ENCODE measurements at regions of chr15 and their contacts with region 1.

Region 1: DNA sequence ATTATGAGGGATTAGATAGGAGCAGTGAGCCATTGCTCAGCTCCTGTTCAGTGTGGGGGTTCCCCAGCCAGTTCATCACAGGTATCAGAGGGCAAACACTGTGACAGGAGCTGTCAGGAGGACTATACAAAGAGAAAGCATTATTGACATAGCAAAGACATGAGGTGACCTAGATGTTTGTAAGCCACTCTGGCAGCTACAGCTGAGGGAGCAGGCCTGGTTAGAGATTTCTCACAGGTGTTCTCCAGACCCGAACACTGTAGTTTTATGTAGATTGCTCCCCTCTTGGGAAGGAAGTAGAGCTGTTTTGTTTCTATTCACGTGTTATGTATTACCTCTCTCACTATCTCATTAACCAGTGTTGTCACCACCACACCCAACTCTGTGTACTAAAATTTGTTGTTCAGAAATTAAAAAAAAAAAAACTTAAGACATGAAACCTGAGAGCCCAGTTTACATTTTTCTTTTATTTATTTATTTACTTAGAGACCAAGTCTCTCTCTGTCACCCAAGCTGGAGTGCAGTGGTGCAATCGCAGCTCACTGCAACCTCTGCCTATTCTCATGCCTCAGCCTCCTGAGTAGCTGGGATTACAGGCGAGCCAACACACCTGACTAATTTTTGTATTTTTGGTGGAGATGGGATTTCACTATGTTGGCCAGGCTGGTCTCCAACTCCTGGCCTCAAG is 123.7 kb downstream of the RBPMS2 start:
- DNase-seq: peak; percentile 39
- ATAC-seq: peak; percentile 86
- H3K4me3 Mint-ChIP-seq: peak overlapping the region; percentile 24
- H3K27ac Mint-ChIP-seq: peak overlapping the region; percentile 77
- H3K4me1 Mint-ChIP-seq: peaks cover 28% of the 10 kb centered on the region
- H3K27me3 Mint-ChIP-seq: no peaks in the 10 kb centered on the region

Region 2: DNA sequence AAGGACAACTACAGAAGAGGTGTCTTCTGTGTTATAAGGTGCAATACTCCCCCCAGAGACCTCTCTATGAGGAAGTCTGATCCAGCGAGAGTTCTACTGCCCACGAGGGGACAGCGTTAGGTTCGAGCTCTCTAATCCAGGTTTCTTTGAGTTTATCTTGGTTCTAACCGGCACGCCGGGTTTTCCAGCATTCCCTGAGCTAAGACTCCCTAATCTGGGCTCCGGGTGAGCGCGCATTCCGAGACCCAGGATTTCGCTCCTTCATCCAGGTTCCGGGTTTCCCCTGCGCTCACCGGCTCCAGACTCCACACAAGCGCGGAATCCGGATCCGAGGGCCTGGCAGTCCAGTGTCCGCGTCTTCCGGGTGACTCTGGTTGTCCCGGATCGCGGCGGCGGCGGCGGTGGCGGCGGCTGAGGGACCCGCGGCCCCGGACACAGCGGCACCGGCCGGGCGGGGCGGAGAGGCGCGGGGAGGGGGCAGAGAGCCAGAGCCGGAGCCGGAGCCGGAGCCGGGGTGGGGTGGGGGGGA is 191.4 kb before region 1 on chr15 and contains the start of gene ZNF609:
- CTCF ChIA-PET with region 1: interaction called, 12 read pairs
- POLR2A ChIA-PET with region 1: no interaction called
- DNase-seq: peak; percentile 89
- ATAC-seq: peak; percentile 68
- H3K4me3 Mint-ChIP-seq: peak within 1 kb of the TSS; percentile 90
- H3K27ac Mint-ChIP-seq: peak within 1 kb of the TSS; percentile 89
- H3K4me1 Mint-ChIP-seq: peaks cover 68% of the 10 kb centered on the region
- H3K27me3 Mint-ChIP-seq: no peaks in the 10 kb centered on the region
- total RNA-seq, gene ZNF609: 39.9 to 40.5 TPM

Region 3: GRCh38 chr15:64634576-64635498 is 16.9 kb before region 1 on chr15:
- CTCF ChIA-PET with region 1: interaction called, 20 read pairs
- POLR2A ChIA-PET with region 1: interaction called, 8 read pairs
- DNase-seq: peak; percentile 73
- ATAC-seq: peak; percentile 78
- H3K4me3 Mint-ChIP-seq: peak overlapping the region; percentile 52
- H3K27ac Mint-ChIP-seq: peak overlapping the region; percentile 83
- H3K4me1 Mint-ChIP-seq: peaks cover 73% of the 10 kb centered on the region
- H3K27me3 Mint-ChIP-seq: no peaks in the 10 kb centered on the region

Region 4: GRCh38 chr15:64665179-64665578 is 13.5 kb after region 1 on chr15:
- CTCF ChIA-PET with region 1: interaction called, 11 read pairs
- POLR2A ChIA-PET with region 1: no interaction called
- DNase-seq: no peak
- ATAC-seq: no peak
- H3K4me3 Mint-ChIP-seq: no peak overlapping the region
- H3K27ac Mint-ChIP-seq: no peak overlapping the region
- H3K4me1 Mint-ChIP-seq: no peaks in the 10 kb centered on the region
- H3K27me3 Mint-ChIP-seq: no peaks in the 10 kb centered on the region

Region 5: DNA sequence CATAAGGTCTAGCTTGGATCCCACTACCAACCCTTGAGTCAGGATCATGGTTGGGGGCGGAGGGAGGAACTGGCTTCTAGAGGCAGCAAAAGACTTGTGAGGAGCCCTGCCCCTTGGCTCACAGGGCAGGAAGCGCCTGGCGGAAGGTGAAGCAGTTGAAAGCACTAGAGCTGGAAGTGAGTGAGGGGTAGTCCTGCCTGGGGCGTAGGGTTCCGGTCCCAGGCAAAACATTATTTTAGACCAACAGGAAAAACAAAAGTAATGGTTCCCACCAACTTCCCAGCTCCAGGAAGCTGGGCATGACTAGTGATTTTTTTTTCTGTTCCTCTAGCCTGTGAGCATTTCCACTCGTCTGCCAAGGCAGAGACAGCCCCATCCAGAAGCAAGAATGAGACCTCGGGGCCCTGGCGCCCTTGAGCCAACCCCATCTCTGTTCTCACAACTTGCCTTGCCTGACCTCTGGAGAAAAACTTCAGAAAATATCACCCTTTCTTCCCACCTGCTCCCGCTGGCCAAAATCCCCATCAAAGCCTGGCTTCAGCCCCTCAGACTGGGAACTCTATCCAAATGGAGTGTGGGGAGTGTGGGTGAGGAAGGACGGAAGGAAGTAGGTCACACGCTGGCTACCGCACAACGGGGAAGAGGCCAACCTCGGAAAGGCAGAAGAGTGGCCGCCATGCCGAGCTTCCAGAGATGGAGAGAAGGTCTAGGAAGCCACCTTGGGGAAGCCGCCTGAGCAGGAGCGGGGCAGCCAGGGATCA is 66.2 kb after region 1 on chr15:
- CTCF ChIA-PET with region 1: no interaction called
- POLR2A ChIA-PET with region 1: no interaction called
- DNase-seq: no peak
- ATAC-seq: no peak
- H3K4me3 Mint-ChIP-seq: no peak overlapping the region
- H3K27ac Mint-ChIP-seq: peak overlapping the region; percentile 28
- H3K4me1 Mint-ChIP-seq: peaks cover 9% of the 10 kb centered on the region
- H3K27me3 Mint-ChIP-seq: no peaks in the 10 kb centered on the region

Region 6: GRCh38 chr15:64740311-64741170 is 88.8 kb after region 1 on chr15:
- CTCF ChIA-PET with region 1: no interaction called
- POLR2A ChIA-PET with region 1: no interaction called
- DNase-seq: no peak
- ATAC-seq: no peak
- H3K4me3 Mint-ChIP-seq: no peak overlapping the region
- H3K27ac Mint-ChIP-seq: no peak overlapping the region
- H3K4me1 Mint-ChIP-seq: no peaks in the 10 kb centered on the region
- H3K27me3 Mint-ChIP-seq: no peaks in the 10 kb centered on the region